HepG2 (cell line): ENCODE measurements at regions of chr9 and their contacts with region 1.

Region 1: DNA sequence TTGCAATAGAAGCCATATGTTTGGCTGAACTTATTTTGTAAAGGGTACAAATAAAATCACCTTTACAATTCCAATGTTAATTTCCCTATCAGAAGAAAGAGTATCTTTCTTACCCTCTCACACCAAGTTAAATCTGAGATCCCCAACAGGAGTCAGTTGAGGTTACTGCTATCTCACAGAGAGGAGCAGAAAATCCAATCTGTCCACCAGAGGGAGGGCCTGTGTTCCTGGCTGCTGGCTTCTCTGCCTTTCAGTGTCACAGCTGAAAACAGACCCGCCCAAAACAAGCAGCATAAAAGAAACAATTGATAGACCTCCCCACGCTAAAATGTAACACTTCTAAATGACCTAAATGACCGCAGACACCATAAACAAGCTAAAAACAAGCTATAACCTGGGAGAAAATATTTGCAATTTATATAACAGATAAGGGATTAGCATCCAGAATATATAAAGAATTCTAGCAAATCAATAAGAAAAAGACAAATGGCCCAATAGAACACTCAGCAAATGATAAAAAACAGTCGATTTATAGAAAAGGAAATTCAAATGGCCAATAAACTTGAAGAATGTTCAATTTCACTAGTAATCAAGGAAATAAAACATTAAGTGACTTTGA is 24.5 kb upstream of the MVB12B start:
- DNase-seq: peak; percentile 69
- ATAC-seq: peak; percentile 81
- H3K4me3 ChIP-seq: no peak overlapping the region
- H3K27ac ChIP-seq: no peak overlapping the region
- H3K4me1 ChIP-seq: peaks cover 53% of the 10 kb centered on the region
- H3K27me3 ChIP-seq: peaks cover 0 to 4% of the 10 kb centered on the region in 2 experiments; a peak in 1 of 5 replicates
- CTCF ChIP-seq: peak; percentile 86
- EP300 ChIP-seq: no peak
- POLR2A ChIP-seq: no peak
- RAD21 ChIP-seq: peak; percentile 84

Region 2: GRCh38 chr9:126108240-126108639 is 193.9 kb before region 1 on chr9:
- CTCF ChIA-PET with region 1: no interaction called
- POLR2A ChIA-PET with region 1: no interaction called
- in situ Hi-C with region 1: no loop called
- intact Hi-C with region 1: no loop called
- DNase-seq: no peak
- ATAC-seq: peak; percentile 59; the same call in 2 of the 3 replicates
- H3K4me3 ChIP-seq: no peak overlapping the region
- H3K27ac ChIP-seq: no peak overlapping the region
- H3K4me1 ChIP-seq: no peaks in the 10 kb centered on the region
- H3K27me3 ChIP-seq: peaks cover 0 to 43% of the 10 kb centered on the region in 2 experiments; a peak in 2 of 5 replicates
- CTCF ChIP-seq: no peak
- EP300 ChIP-seq: no peak
- POLR2A ChIP-seq: no peak
- RAD21 ChIP-seq: no peak

Region 3: GRCh38 chr9:126317513-126317912 is 15.4 kb after region 1 on chr9:
- CTCF ChIA-PET with region 1: no interaction called
- POLR2A ChIA-PET with region 1: no interaction called
- in situ Hi-C with region 1: no loop called
- intact Hi-C with region 1: loop called (anchors 2 kb)
- DNase-seq: peak; percentile 47
- ATAC-seq: peak; percentile 56
- H3K4me3 ChIP-seq: no peak overlapping the region
- H3K27ac ChIP-seq: no peak overlapping the region
- H3K4me1 ChIP-seq: peaks cover 67% of the 10 kb centered on the region
- H3K27me3 ChIP-seq: peaks cover 0 to 3% of the 10 kb centered on the region in 2 experiments; a peak in 2 of 5 replicates
- CTCF ChIP-seq: peak; percentile 56
- EP300 ChIP-seq: no peak
- POLR2A ChIP-seq: no peak
- RAD21 ChIP-seq: peak; percentile 43; the same call in 1 of the 2 replicates

Region 4: DNA sequence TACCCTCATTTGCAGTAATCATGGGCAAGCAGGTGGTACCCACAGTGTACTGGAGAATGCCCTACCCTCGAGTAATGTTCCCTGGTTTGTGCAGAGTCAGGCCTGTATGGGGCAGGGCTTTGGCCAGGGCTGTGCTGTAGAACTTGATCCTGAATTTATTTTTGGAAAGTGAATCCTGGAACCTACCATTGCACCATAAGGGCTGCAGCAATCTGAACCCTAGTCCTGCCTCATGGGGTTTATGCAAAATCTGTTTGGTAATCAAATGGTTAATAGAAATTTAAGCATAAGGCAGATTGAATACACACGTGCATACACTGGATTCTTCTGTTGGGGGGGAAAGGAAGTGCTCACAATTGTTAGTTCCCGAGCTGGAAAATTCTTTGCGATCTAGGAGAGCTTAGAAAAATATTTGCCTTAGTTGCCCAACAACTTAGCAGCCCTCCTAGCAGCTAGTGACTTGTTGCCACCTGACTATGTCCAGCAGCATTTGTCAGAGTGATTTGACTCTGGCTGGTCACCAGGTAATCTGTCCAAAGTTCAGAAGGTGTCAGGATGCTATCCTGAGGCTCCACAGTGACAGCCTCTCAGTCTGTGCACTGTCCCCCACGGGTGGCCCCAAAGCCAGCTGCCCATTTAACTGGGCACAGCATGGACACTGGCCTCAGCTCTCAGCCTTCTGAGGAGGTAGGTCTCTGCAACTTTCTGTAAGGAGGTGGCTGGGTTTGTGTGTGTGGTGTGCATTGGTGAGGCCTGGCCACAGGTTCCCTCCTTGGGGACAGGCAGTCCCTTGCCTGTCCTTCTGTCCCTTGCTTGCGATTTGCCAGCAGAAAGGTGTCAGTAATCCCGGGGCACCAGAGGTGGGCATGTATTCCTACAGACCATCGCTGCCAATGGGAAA is 32.9 kb after region 1 on chr9:
- CTCF ChIA-PET with region 1: no interaction called
- POLR2A ChIA-PET with region 1: no interaction called
- in situ Hi-C with region 1: no loop called
- intact Hi-C with region 1: loop called (anchors 2 kb)
- DNase-seq: peak; percentile 99
- ATAC-seq: peak; percentile 94
- H3K4me3 ChIP-seq: peak overlapping the region; percentile 64 to 82 (median 78); a peak in 5 of 6 replicates
- H3K27ac ChIP-seq: peak overlapping the region; percentile 85
- H3K4me1 ChIP-seq: peaks cover 95% of the 10 kb centered on the region
- H3K27me3 ChIP-seq: no peaks in the 10 kb centered on the region; a peak in 1 of 5 replicates
- CTCF ChIP-seq: peak; percentile 1; the same call in 1 of the 2 replicates
- EP300 ChIP-seq: peak; percentile 11 to 82; a peak in 3 of 4 replicates
- POLR2A ChIP-seq: peak; percentile 60 to 89
- RAD21 ChIP-seq: no peak

Region 5: DNA sequence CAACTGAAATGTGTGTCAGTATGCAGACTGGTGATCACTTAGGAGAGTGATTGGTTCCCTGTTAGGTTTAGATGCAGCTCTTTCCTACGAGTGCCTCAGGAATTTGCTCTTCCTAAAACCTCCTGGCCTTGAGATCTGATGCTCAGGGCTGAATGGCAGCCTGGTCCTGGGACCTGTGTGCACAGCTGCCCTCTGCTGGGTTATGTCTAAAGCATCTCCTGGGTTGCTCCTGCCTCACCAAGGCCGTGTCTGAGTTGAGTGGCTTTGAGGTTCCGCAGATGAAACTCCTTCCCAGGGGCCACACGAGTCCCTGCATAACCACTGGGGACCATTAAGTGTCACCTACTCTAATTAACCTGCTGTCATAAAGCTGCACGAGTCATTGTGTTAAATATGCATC is 84.0 kb after region 1 on chr9:
- CTCF ChIA-PET with region 1: interaction called, 12 read pairs
- POLR2A ChIA-PET with region 1: no interaction called
- in situ Hi-C with region 1: no loop called
- intact Hi-C with region 1: loop called (anchors 2 kb)
- DNase-seq: peak; percentile 37
- ATAC-seq: peak; percentile 88
- H3K4me3 ChIP-seq: no peak overlapping the region
- H3K27ac ChIP-seq: no peak overlapping the region
- H3K4me1 ChIP-seq: no peaks in the 10 kb centered on the region
- H3K27me3 ChIP-seq: no peaks in the 10 kb centered on the region
- CTCF ChIP-seq: peak; percentile 70
- EP300 ChIP-seq: no peak
- POLR2A ChIP-seq: no peak
- RAD21 ChIP-seq: peak; percentile 75

Region 6: DNA sequence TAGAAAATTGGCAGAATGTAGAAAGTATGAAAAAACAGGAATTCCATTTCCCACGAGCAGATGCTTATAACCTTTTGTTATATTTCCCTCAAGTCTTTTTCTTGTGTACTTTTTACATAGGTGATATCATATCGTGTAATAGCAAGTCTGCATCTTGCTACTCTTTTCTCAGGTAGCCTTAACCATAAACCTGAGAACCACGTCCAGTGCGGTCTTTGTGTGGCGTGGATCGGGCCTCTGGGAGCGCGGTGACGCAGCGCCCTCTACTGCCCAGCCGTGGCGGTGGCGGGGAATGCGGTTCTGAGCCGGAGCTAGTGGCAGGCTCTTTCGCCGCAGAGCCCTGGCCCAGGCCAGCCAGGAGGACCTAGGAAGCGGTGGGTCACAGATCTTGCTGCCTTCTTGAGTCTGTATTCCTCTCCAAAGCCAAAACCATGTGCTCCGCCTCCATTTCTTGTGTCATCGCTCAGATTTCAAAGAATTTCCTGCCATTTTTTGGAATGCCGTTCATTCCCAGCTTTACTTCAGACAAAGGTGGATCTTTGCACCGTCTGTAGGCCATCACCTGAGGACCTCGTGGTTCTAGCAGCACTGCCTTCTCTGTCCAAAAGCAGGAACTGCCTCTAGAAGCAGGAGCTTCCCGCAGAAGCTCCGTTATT is 96.4 kb after region 1 on chr9:
- CTCF ChIA-PET with region 1: interaction called, 47 read pairs
- POLR2A ChIA-PET with region 1: interaction called, 3 read pairs
- in situ Hi-C with region 1: loop called (anchors 5 kb)
- intact Hi-C with region 1: loop called (anchors 1 kb)
- DNase-seq: peak; percentile 37
- ATAC-seq: peak; percentile 94
- H3K4me3 ChIP-seq: no peak overlapping the region
- H3K27ac ChIP-seq: no peak overlapping the region
- H3K4me1 ChIP-seq: no peaks in the 10 kb centered on the region
- H3K27me3 ChIP-seq: no peaks in the 10 kb centered on the region
- CTCF ChIP-seq: peak; percentile 98
- EP300 ChIP-seq: no peak
- POLR2A ChIP-seq: no peak
- RAD21 ChIP-seq: peak; percentile 94

Region 7: GRCh38 chr9:126490871-126491567 is 188.9 kb after region 1 on chr9:
- CTCF ChIA-PET with region 1: no interaction called
- POLR2A ChIA-PET with region 1: no interaction called
- in situ Hi-C with region 1: loop called (anchors 5 kb)
- intact Hi-C with region 1: no loop called
- DNase-seq: peak; percentile 46
- ATAC-seq: no peak
- H3K4me3 ChIP-seq: no peak overlapping the region
- H3K27ac ChIP-seq: no peak overlapping the region
- H3K4me1 ChIP-seq: peaks cover 10% of the 10 kb centered on the region; the same call in 1 of the 2 replicates
- H3K27me3 ChIP-seq: no peaks in the 10 kb centered on the region
- CTCF ChIP-seq: peak; percentile 75
- EP300 ChIP-seq: no peak
- POLR2A ChIP-seq: no peak
- RAD21 ChIP-seq: peak; percentile 56; the same call in 1 of the 2 replicates